SK-N-SH (cell line): ENCODE measurements at regions of chr17 and their contacts with region 1.

Region 1: DNA sequence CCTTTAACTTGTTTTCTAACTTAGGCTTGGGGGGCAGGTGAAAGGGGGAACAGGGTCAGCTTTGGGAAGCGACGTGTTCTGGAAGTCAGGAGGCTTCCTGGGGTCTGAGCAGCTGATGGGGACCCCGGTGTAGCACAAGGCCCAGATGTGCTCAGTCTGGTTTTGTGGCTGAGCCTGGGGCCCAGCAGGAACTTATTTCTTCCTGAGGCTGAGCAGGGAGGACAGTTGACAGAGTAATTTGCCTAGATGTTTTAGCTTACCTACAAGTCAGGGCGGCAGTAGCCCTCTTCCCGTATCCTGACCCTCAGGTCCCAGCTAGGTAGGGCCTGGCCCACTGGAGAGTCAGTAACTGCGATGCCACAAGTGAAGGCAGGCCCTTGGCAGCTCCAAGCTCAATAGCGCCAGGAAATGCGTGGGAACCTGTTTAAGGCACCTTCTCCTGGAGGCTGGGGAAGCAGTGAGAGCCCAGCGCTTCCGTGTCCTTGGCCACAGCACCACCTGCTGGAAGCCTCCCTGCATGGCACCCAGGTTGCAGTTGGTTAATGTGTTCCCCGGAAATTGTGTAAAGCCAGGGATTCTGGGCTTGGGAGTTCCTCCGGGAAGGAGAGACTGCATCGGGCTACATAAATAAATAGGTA is 5.2 kb downstream of the CCR7 start:
- DNase-seq: peak; percentile 91
- H3K4me3 ChIP-seq: peak overlapping the region in 1 of 2 experiments; percentile 18; a peak in 2 of 4 replicates
- H3K27ac ChIP-seq: peak overlapping the region in 1 of 2 experiments; percentile 79; a peak in 2 of 4 replicates
- H3K4me1 ChIP-seq: peaks cover 0 to 51% of the 10 kb centered on the region in 2 experiments; a peak in 2 of 4 replicates
- H3K27me3 ChIP-seq: peaks cover 11% of the 10 kb centered on the region; the same call in 1 of the 2 replicates
- CTCF ChIP-seq: peak; percentile 96
- EP300 ChIP-seq: 0 out of 4 replicates have a peak, but pooled peaks of 1 of the 2 experiments have one; percentile 34
- RAD21 ChIP-seq: peak; percentile 100

Region 2: DNA sequence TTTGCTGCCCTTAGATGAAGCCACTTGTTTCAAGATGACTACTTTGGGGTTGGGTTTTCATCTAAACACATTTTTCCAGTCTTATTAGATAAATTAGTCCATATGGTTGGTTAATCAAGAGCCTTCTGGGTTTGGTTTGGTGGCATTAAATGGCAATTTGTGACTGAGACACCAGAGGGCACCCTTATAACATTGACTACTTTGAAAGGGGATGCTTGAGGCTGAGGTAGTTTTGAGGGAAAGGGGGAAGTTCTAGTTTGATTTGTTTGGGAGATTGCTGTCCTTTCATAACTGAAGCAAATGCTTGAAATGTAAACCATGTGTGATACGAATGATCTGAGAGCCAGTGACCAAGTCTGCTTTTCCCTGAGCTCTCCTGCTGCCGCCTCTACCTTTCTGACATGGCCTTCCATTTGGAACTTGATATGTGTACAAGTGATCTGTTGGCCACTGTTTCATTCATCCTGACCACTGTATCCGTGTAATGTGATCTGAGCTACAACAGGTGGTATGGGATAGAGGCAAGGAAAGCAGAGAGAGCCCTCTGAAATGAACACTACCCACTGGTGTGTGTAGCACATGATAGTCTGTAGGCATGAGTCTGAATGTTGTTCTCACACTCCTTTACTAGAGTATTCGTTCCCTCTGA is 256.9 kb before region 1 on chr17:
- CTCF ChIA-PET with region 1: interaction called, 35 read pairs
- POLR2A ChIA-PET with region 1: no interaction called
- DNase-seq: peak; percentile 63
- H3K4me3 ChIP-seq: no peak overlapping the region; a peak in 1 of 4 replicates
- H3K27ac ChIP-seq: peak overlapping the region; percentile 82 to 99
- H3K4me1 ChIP-seq: peaks cover 48 to 53% of the 10 kb centered on the region in 2 experiments
- H3K27me3 ChIP-seq: no peaks in the 10 kb centered on the region
- CTCF ChIP-seq: peak; percentile 86
- EP300 ChIP-seq: 0 out of 4 replicates have a peak, but pooled peaks of 1 of the 2 experiments have one; percentile 45
- RAD21 ChIP-seq: peak; percentile 96

Region 3: DNA sequence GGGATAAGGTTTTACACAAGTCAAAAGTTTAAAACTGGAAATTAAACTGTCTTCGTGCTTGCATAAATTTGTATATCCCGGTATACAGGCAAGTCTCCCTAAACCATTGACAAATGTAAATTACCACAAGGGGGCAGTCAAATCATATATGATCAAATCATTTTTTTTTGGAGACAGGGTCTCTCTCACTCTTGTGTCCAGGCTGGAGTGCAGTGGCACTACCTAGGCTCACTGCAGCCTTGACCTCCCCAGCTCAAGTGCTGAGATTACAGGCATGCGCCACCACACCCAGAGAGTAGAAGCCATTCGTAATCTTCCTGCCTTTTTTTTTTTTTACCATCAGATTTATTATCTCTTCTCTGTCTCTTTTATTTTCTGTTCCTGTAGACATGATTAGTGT is 160.9 kb before region 1 on chr17:
- CTCF ChIA-PET with region 1: interaction called, 19 read pairs
- POLR2A ChIA-PET with region 1: no interaction called
- DNase-seq: peak; percentile 48
- H3K4me3 ChIP-seq: no peak overlapping the region
- H3K27ac ChIP-seq: peak overlapping the region in 1 of 2 experiments; percentile 19; a peak in 1 of 4 replicates
- H3K4me1 ChIP-seq: no peaks in the 10 kb centered on the region; a peak in 1 of 4 replicates
- H3K27me3 ChIP-seq: no peaks in the 10 kb centered on the region
- CTCF ChIP-seq: peak; percentile 64
- EP300 ChIP-seq: no peak
- RAD21 ChIP-seq: peak; percentile 69

Region 4: GRCh38 chr17:40433551-40434415 is 126.3 kb before region 1 on chr17:
- CTCF ChIA-PET with region 1: interaction called, 202 read pairs
- POLR2A ChIA-PET with region 1: no interaction called
- DNase-seq: peak; percentile 58
- H3K4me3 ChIP-seq: no peak overlapping the region
- H3K27ac ChIP-seq: peak overlapping the region; percentile 48 to 99
- H3K4me1 ChIP-seq: peaks cover 9 to 34% of the 10 kb centered on the region in 2 experiments; a peak in 3 of 4 replicates
- H3K27me3 ChIP-seq: no peaks in the 10 kb centered on the region
- CTCF ChIP-seq: peak; percentile 59
- EP300 ChIP-seq: peak in 1 of 2 experiments; percentile 57; a peak in 2 of 4 replicates
- RAD21 ChIP-seq: peak; percentile 52

Region 5: GRCh38 chr17:40450175-40450574 is 109.9 kb before region 1 on chr17:
- CTCF ChIA-PET with region 1: interaction called, 202 read pairs
- POLR2A ChIA-PET with region 1: no interaction called
- DNase-seq: no peak
- H3K4me3 ChIP-seq: no peak overlapping the region
- H3K27ac ChIP-seq: peak overlapping the region in 1 of 2 experiments; percentile 71; a peak in 2 of 4 replicates
- H3K4me1 ChIP-seq: peaks cover 26 to 70% of the 10 kb centered on the region in 2 experiments
- H3K27me3 ChIP-seq: no peaks in the 10 kb centered on the region
- CTCF ChIP-seq: peak; percentile 65
- EP300 ChIP-seq: no peak
- RAD21 ChIP-seq: peak; percentile 19; the same call in 1 of the 2 replicates

Region 6: GRCh38 chr17:40490289-40490853 is 69.7 kb before region 1 on chr17:
- CTCF ChIA-PET with region 1: interaction called, 11 read pairs
- POLR2A ChIA-PET with region 1: no interaction called
- DNase-seq: peak; percentile 89
- H3K4me3 ChIP-seq: no peak overlapping the region
- H3K27ac ChIP-seq: peak overlapping the region in 1 of 2 experiments; percentile 84; a peak in 2 of 4 replicates
- H3K4me1 ChIP-seq: peaks cover 24 to 34% of the 10 kb centered on the region in 2 experiments
- H3K27me3 ChIP-seq: no peaks in the 10 kb centered on the region
- CTCF ChIP-seq: no peak
- EP300 ChIP-seq: peak in 1 of 2 experiments; percentile 62; a peak in 1 of 4 replicates
- RAD21 ChIP-seq: peak; percentile 45

Region 7: GRCh38 chr17:40510328-40510648 is 49.8 kb before region 1 on chr17:
- CTCF ChIA-PET with region 1: no interaction called
- POLR2A ChIA-PET with region 1: no interaction called
- DNase-seq: no peak
- H3K4me3 ChIP-seq: no peak overlapping the region
- H3K27ac ChIP-seq: no peak overlapping the region
- H3K4me1 ChIP-seq: peaks cover 7 to 25% of the 10 kb centered on the region in 2 experiments; a peak in 2 of 4 replicates
- H3K27me3 ChIP-seq: no peaks in the 10 kb centered on the region
- CTCF ChIP-seq: no peak
- EP300 ChIP-seq: no peak
- RAD21 ChIP-seq: no peak

Region 8: DNA sequence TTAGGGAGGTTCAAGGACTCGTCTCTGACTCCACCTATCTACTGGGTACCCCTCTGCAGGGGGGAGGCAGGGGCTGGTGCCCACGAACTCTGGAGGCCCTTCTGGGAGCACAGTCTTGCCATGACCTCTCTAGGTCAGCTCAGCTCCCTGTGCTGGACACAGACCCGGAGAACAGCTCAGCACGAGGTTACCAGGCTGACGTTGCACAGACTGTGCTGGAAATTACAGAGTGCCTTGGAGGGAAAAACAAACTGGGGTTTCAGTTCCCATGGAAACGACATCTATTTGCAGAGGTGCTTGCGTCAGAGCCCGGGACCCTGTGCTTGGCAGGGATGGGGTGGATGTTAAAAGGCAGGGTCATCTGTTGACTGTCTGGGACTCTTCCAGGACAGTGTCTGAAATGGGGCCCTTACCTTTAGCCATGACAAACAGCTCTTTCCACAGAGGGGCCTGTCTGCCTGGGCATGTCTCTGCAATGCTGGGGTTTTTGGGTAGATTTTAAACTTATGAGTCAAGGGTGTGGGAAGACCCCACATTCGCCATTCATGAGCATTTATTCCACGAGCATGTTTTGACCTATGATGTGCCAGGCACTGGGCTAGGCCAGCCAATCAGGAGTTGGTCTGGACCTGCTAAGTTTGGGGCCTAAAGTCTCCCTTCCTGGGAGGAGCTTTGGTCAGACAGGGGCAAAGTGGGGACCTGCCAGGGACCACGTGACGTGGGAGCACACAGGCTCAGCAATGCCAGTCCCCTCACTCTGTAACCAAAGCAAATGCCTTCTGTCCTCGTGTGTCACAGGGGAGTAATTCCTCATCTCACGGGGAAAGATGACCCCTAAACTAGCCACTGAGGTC is 17.3 kb before region 1 on chr17:
- CTCF ChIA-PET with region 1: interaction called, 381 read pairs
- POLR2A ChIA-PET with region 1: interaction called, 12 read pairs
- DNase-seq: peak; percentile 88
- H3K4me3 ChIP-seq: no peak overlapping the region
- H3K27ac ChIP-seq: peak overlapping the region; percentile 63 to 96
- H3K4me1 ChIP-seq: peaks cover 8 to 79% of the 10 kb centered on the region in 2 experiments; a peak in 3 of 4 replicates
- H3K27me3 ChIP-seq: no peaks in the 10 kb centered on the region
- CTCF ChIP-seq: no peak
- EP300 ChIP-seq: peak in 1 of 2 experiments; percentile 91; a peak in 2 of 4 replicates
- RAD21 ChIP-seq: no peak